ENCODE measurements at regions of chr17 and their contacts with region 1.

Region 1: GRCh38 chr17:36921095-36921851 is 16.0 kb upstream of the LHX1 start:
- DNase-seq: peak; percentile 92
- ATAC-seq: peak; percentile 93
- H3K4me3 ChIP-seq: peak overlapping the region; percentile 27; the same call in 1 of the 2 replicates
- H3K27ac ChIP-seq: peak overlapping the region; percentile 95
- H3K4me1 ChIP-seq: peaks cover 42% of the 10 kb centered on the region
- H3K27me3 ChIP-seq: no peaks in the 10 kb centered on the region
- CTCF ChIP-seq: no peak

Region 2: DNA sequence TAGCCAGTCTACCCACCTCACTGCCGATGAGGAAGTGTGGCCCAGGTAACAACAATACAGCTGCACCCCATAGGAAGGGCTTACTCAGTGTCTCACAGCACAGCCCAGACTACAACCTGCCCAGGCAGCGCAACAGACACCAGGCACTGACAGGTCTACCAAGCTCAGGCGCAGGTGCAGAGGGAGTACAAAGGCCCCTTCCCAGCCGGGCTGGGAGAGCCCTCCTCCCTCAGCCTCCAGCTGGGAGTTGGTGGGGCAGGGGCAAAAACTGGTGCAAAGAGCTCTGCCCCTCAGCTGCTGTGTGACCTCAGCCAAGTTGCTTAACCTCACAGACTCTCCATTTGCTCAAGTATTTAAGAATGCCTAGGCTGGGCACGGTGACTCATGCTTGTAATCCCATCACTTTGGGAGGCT is 96.6 kb before region 1 on chr17:
- CTCF ChIA-PET with region 1: no interaction called
- POLR2A ChIA-PET with region 1: no interaction called
- intact Hi-C with region 1: no loop called
- DNase-seq: no peak
- ATAC-seq: no peak
- H3K4me3 ChIP-seq: no peak overlapping the region
- H3K27ac ChIP-seq: no peak overlapping the region
- H3K4me1 ChIP-seq: no peaks in the 10 kb centered on the region
- H3K27me3 ChIP-seq: peaks cover 16% of the 10 kb centered on the region
- CTCF ChIP-seq: no peak

Region 3: GRCh38 chr17:36849871-36850348 is 71.4 kb before region 1 on chr17:
- CTCF ChIA-PET with region 1: no interaction called
- POLR2A ChIA-PET with region 1: no interaction called
- intact Hi-C with region 1: loop called (anchors 2 kb)
- DNase-seq: peak; percentile 25
- ATAC-seq: peak; percentile 31
- H3K4me3 ChIP-seq: no peak overlapping the region
- H3K27ac ChIP-seq: peak overlapping the region; percentile 64
- H3K4me1 ChIP-seq: peaks cover 22% of the 10 kb centered on the region
- H3K27me3 ChIP-seq: no peaks in the 10 kb centered on the region
- CTCF ChIP-seq: no peak; the same call in 1 of the 2 replicates

Measured in PC-3 (cell line).